Posterior cingulate gyrus (tissue), 11 donors: ENCODE measurements at regions of chr4 and their contacts with region 1.

Region 1: GRCh38 chr4:164383358-164384220 is 370.3 kb upstream of the SMIM31 start:
- DNase-seq: peak; percentile 77 to 99 (median 92)

Region 2: GRCh38 chr4:163764569-163764968 is 619.0 kb before region 1 on chr4:
- intact Hi-C with region 1: loop called (anchors 5 kb)
- DNase-seq: no peak

Region 3: GRCh38 chr4:164177153-164177552 is 206.4 kb before region 1 on chr4:
- intact Hi-C with region 1: loop called (anchors 5 kb)
- DNase-seq: no peak

Region 4: DNA sequence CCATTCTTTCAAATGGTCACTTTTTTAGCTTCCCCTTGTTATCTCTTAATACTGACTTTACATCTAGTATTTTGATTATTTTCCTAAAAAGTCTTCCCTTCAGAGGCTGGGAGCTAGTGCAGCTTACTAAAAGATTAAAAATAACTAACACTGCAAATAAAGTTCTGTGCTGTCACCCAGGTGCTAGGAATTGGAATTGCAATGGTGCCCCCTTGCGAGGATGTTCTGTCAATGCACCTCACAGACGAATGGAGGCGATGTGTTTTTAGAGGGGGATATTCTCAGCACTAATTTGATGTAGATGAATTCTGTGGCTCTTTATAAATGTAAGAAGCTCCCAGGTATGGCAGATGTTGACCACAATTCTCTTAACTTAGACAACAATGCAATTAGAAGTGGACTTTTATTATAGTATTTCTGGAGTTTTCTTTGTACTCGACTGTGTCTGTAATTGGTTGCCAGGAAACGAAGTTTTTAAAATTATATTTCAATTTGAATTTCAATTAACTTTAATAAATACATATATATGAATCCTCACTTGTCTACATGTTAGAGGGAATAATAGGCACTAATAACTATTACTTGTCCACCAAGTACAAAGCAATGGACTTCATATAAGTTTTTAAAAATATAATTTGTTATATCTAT is 348.4 kb after region 1 on chr4:
- intact Hi-C with region 1: loop called (anchors 10 kb)
- DNase-seq: peak; percentile 35 to 92 (median 66)